ENCODE measurements at regions of chr1 and their contacts with region 1.

Region 1: GRCh38 chr1:155017041-155017945 is 14.7 kb downstream of the ZBTB7B start:
- DNase-seq: peak; percentile 94
- H3K4me3 Mint-ChIP-seq: peak overlapping the region; percentile 56
- H3K27ac Mint-ChIP-seq: peak overlapping the region; percentile 85
- H3K4me1 Mint-ChIP-seq: peaks cover 65% of the 10 kb centered on the region
- H3K27me3 Mint-ChIP-seq: no peaks in the 10 kb centered on the region

Region 2: GRCh38 chr1:154955718-154956543 is 61.4 kb before region 1 on chr1 and contains the start of gene PBXIP1:
- CTCF ChIA-PET with region 1: interaction called, 8 read pairs
- intact Hi-C with region 1: loop called (anchors 1 kb)
- DNase-seq: peak; percentile 88
- H3K4me3 Mint-ChIP-seq: peak within 1 kb of the TSS; percentile 91
- H3K27ac Mint-ChIP-seq: peak within 1 kb of the TSS; percentile 96
- H3K4me1 Mint-ChIP-seq: peaks cover 74% of the 10 kb centered on the region
- H3K27me3 Mint-ChIP-seq: no peaks in the 10 kb centered on the region
- total RNA-seq, gene PBXIP1: 55.3 to 55.5 TPM

Region 3: DNA sequence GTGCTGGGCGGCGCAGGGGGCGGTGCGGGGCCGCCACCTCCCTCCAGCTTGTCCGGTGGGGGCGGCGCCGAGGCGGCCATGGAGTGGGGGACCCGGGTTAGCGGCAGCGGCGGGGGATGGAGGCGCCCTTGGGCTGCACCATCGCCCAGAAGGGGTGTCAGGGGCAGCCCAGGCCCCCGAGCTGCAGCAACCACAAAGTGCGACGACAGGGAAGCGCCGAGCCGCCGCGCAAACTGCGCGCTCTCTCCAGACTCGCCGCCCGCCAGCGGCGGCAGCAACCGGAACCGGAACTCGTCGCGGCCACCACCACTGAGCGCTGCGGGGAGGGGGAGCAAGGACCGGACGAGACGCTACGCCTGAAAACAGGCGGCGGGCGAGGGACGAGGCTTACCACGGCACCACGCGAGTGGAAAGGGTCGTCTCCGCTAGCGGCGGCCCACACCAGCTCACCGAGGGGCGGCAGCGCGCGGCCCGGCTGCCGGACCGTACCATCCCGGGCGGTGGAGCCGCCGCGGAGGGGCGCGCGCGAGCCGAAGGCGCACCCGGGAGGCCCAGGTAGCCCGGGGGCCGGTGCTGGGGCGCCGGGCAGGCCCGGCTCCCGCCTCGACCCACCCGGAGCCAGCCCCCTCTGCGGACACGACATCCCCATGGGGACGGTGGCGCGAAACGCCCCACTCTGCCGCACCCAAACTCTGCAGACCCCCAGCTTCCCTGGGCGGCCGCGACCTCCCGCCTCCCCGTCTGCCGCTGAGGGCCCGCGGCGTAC is 55.6 kb before region 1 on chr1 and contains the start of gene PYGO2:
- CTCF ChIA-PET with region 1: interaction called, 8 read pairs
- intact Hi-C with region 1: loop called (anchors 1 kb)
- DNase-seq: peak; percentile 86
- H3K4me3 Mint-ChIP-seq: peak within 1 kb of the TSS; percentile 96
- H3K27ac Mint-ChIP-seq: peak within 1 kb of the TSS; percentile 94
- H3K4me1 Mint-ChIP-seq: peaks cover 40% of the 10 kb centered on the region
- H3K27me3 Mint-ChIP-seq: no peaks in the 10 kb centered on the region
- total RNA-seq, gene PYGO2: 35.6 to 36.3 TPM

Region 4: DNA sequence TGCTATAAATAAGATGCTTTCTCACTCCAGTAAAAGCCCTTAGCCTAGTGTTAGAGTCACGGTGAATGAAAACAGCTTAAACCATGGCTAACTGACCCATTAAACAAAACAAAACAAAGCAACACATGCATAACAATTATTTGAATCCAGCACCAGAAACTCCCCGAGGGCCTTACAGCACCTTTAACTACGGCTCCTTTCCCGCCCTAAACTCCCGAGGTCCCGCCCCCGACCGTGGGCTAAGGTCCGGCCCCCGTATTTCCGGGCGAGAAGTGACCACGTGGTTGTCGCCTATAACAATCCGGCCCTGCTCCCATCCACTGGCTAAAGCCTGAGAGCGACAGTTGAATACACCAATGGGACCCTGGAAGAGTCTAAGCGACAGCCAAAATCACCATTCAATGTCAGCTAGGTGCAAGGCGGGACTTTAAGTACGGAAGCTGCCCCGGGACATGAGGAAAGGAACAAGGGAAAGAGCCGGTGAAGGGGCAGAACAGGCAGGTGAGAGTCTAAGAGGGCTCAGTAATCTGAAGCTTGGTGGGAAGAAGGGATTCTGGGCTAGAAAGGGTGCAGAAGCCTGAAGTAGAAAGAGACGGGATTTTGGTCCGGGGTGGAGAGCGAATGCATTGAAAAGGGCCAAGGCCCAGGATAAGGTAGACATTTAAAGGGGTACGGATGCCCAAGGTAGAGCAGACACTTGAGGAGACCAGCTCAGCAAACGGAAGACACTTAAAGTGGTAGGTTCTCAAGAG is 34.2 kb before region 1 on chr1 and contains the start of gene FLAD1:
- CTCF ChIA-PET with region 1: interaction called, 30 read pairs
- intact Hi-C with region 1: loop called (anchors 1 kb)
- DNase-seq: peak; percentile 99
- H3K4me3 Mint-ChIP-seq: no peak within 1 kb of the TSS
- H3K27ac Mint-ChIP-seq: no peak within 1 kb of the TSS
- H3K4me1 Mint-ChIP-seq: peaks cover 30% of the 10 kb centered on the region
- H3K27me3 Mint-ChIP-seq: no peaks in the 10 kb centered on the region
- total RNA-seq, gene FLAD1: 27.2 to 30.0 TPM

Region 5: DNA sequence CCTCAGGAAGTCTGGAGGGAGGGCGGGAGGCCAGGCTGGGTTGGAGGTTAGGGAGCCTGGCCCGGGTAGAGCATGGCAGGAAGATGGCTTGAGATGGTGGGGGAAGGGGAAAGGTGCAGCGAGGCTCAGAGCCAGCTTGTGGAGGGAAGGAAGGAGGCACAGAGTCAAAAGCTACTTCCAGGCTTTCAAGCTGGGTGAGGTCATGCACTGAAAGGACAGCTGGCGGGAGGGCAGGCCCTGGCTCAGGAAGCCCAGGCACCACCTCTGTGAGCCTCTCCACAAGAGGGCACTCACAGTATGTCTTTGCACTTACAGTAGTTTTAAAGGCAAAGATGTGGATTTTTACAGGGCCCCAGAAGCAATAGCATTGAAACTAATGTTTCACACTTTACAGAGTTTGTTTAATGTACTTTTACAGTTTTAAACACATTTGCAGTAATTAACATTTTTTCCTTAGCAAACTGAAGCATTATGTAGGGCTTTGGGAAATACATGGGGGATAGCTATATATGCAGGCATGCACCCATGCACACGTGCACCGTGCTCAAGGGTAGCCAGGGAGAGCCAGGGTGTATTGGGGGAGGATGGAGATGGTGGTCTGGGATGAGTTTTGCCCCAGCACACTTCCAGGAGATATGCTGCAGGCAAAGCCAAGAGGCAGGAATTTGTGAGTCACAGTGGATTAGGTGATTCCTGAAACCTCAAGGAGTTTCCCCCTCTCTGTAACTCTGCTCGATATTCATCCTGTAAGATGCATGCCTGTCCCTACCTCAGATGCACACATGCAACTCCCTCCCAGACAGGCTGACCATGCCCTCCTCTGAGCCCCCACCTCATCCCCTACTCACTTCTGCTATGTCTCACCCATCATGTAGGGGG is 27.8 kb after region 1 on chr1:
- CTCF ChIA-PET with region 1: interaction called, 11 read pairs
- intact Hi-C with region 1: loop called (anchors 2 kb)
- DNase-seq: peak; percentile 79
- H3K4me3 Mint-ChIP-seq: no peak overlapping the region
- H3K27ac Mint-ChIP-seq: no peak overlapping the region
- H3K4me1 Mint-ChIP-seq: peaks cover 19% of the 10 kb centered on the region
- H3K27me3 Mint-ChIP-seq: no peaks in the 10 kb centered on the region

Region 6: DNA sequence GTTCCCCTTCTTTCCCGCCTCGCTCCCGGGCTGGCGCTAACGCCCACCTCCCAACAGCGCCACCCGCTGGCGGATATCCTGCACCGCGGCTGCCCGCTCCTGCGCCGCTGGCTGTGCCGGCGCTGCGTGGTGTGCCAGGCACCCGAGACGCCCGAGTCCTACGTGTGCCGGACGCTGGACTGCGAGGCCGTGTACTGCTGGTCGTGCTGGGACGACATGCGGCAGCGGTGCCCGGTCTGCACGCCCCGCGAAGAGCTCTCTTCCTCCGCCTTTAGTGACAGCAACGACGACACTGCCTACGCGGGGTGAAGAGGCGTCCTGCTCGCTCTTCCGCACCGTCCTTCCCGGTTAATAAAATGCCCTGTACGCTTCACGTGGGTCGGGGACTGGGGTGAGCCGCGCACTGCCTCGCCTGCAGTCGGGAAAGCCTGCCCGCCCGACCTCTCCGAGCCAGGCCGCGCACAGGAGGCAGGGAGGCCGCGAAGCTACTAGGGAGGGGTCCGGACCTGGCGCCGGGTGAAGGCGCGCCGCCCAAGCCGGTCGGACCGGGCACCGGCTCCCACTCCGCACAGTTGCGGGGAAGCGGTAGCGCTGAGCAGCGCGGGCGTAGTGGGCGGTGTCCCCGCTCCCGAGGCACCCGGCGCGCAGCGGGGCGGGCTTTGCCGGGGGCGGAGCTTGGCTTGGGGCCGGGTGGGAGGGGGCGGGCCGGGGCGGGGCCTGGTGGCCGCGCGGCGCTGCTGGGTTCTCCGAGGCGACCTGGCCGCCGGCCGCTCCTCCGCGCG is 33.5 kb after region 1 on chr1 and contains the start of gene ADAM15:
- CTCF ChIA-PET with region 1: interaction called, 11 read pairs
- intact Hi-C with region 1: loop called (anchors 2 kb)
- DNase-seq: peak; percentile 85
- H3K4me3 Mint-ChIP-seq: peak within 1 kb of the TSS; percentile 84
- H3K27ac Mint-ChIP-seq: no peak within 1 kb of the TSS
- H3K4me1 Mint-ChIP-seq: peaks cover 24% of the 10 kb centered on the region
- H3K27me3 Mint-ChIP-seq: no peaks in the 10 kb centered on the region
- total RNA-seq, gene ADAM15: 53.8 to 55.8 TPM

Region 7: DNA sequence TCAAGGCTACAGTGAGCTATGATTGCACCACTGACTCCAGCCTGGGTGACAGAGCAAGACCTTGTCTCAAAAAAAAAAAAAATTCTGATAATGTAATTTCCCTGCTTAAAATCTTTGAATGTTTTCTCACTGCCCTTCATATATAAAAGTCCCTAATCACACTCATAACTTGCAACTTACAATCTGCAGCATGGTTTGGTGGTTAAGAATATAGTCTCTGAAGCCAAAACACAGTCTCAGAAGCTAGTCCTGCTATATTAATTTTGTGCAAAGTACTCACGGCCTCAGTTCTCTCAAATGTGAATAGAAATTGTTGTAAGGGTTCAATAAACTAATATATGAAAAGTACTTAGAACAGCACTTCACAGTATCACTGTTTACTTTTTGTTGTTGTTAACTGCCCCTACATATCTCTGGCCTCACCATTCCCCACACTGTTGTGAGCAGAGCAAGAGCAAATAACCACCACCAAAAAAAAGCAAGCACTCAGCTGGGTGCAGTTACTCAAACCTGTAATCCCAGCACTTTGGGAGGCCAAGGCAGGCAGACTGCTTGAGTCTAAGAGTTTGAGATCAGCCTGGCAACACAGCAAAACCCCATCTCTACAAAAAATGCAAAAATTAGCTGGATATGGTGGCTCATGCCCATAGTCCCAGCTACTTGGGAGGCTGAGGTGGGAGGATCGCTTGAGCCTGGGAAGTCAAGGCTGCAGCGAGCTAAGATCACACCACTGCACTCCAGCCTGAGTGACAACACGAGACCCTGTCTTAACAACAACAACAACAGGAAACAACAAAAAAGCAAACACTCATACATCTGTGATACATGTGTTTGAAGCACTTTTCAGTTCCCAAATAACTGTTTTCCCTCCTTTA is 522.9 kb after region 1 on chr1:
- CTCF ChIA-PET with region 1: no interaction called
- intact Hi-C with region 1: no loop called
- DNase-seq: no peak
- H3K4me3 Mint-ChIP-seq: no peak overlapping the region
- H3K27ac Mint-ChIP-seq: peak overlapping the region; percentile 60
- H3K4me1 Mint-ChIP-seq: peaks cover 64% of the 10 kb centered on the region
- H3K27me3 Mint-ChIP-seq: no peaks in the 10 kb centered on the region

Measured in activated naive CD4-positive, alpha-beta T cell treated with anti-CD3 and anti-CD28 coated beads for 36 hours (primary cell).